Activated T-helper 1 cell treated with anti-CD3 and anti-CD28 coated beads, Interleukin-12 subunit alpha, Interleukin-12 subunit beta, Interleukin-2, Interleukin-4 antibody, amounts not matched to agents 30 ng/mL and 10 ng/mL and 1 ng/mL, durations not matched to agents 14 hours and 24 hours and 36 hours (primary cell): ENCODE measurements at regions of chr17 and their contacts with region 1.

Region 1: DNA sequence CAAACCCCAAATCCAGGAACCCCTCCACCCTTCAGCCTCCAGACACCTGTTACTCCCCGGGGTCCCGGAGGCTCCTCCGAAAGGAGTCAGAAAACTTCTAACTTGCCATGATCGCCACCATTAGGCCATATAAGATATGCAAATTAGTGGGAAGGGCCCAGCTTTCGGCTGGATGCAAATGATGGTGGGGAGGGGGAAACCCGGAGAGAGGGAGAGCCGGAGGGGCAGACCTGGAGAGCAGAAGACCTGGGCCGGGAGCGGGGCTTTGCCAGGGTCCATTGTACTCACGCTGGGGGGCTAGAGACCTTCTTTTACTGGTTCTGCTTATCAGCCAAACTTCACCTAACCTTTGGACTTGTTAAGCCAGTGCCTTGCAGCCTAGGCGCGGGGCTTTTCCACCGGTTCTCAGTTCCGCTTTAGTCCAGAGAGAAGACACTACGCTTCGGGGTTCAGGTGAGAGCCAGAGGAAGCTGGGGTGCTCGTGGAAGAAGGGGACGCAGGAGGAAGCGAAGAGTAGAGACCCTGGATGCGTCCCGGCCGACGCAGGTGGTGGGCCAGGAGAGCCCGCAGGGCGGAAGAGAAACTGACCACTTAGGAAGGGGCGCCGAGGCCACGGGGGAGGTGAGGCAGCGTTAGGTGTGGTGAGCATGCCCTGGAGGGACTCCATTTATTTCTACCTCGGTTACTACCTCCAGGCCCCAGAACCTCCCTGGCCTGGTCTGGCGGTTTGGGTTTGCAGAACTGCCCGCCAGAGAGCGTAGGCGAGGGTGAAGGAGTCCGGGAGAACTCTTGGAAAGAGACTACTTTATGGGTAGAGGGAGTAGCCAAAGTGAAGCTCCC is at the start of gene HNF1B:
- DNase-seq: no peak
- H3K4me3 Mint-ChIP-seq: peak within 1 kb of the TSS; percentile 84
- H3K27ac Mint-ChIP-seq: peak within 1 kb of the TSS; percentile 66
- H3K4me1 Mint-ChIP-seq: peaks cover 33% of the 10 kb centered on the region
- H3K27me3 Mint-ChIP-seq: peaks cover 68% of the 10 kb centered on the region
- total RNA-seq, gene HNF1B: 3.2 and 3.6 TPM in 2 replicates

Region 2: DNA sequence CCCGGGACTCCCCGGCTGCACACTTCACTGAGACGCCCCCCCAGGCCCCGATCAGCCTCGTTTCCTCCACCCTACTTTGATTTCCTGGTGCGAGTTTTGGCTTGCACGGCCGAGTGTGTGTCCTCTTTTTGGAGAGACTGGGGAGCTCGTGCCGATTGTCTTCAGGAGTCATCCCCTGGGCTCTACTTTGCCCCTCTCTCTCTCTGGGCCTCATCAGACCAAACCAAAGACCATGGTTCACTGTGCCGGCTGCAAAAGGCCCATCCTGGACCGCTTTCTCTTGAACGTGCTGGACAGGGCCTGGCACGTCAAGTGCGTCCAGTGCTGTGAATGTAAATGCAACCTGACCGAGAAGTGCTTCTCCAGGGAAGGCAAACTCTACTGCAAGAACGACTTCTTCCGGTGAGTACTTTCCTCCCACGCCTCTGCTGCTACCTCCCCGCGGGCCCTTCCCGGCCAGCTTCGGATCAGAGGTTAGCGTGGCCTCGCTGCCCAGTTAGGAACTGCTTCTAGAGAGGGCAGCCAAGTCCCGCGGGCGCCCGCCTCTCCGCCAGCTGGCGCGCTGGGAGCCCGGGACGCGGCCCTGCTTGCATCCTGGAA is 807.1 kb before region 1 on chr17:
- intact Hi-C with region 1: loop called (anchors 5 kb)
- DNase-seq: no peak
- H3K4me3 Mint-ChIP-seq: peak overlapping the region; percentile 73
- H3K27ac Mint-ChIP-seq: peak overlapping the region; percentile 79
- H3K4me1 Mint-ChIP-seq: peaks cover 32% of the 10 kb centered on the region
- H3K27me3 Mint-ChIP-seq: peaks cover 70% of the 10 kb centered on the region

Region 3: DNA sequence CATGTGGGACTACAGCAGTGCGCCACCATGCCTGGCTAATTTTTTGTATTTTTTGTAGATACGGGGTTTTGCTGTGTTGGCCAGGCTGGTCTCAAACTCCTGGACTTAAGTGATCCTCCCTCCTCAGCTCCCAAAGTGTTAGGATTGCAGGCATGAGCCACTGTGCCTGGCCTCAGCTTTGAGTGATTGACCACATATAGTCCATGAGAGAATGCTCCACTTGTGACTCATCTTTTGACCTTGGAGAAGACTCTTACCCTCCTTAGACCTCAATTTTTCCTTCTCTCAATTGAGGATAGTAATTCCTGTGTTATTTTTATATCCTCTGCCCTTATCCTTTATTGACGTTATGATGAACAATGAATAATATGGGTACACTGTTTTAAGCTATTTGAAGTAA is 286.4 kb before region 1 on chr17:
- intact Hi-C with region 1: no loop called
- DNase-seq: no peak
- H3K4me3 Mint-ChIP-seq: no peak overlapping the region
- H3K27ac Mint-ChIP-seq: no peak overlapping the region
- H3K4me1 Mint-ChIP-seq: peaks cover 11% of the 10 kb centered on the region
- H3K27me3 Mint-ChIP-seq: no peaks in the 10 kb centered on the region

Region 4: DNA sequence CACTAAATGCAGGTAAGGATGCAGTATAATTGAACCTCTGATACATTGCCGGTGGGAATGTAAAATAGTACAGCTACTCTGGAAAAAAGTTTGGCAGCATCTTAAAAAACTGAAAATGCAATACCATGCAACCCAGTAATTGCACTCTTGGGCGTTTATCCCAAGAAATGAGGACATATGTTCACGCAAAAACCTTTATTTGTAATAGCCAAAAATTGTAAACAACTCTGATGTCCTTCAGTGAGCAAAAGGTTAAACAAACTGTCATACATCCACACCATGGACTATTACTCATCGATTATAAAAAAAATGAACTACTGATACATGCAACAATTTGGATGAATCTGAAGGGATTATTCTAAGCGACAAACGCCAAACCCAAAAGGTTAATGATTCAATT is 152.9 kb before region 1 on chr17:
- intact Hi-C with region 1: no loop called
- DNase-seq: no peak
- H3K4me3 Mint-ChIP-seq: no peak overlapping the region
- H3K27ac Mint-ChIP-seq: no peak overlapping the region
- H3K4me1 Mint-ChIP-seq: peaks cover 29% of the 10 kb centered on the region
- H3K27me3 Mint-ChIP-seq: no peaks in the 10 kb centered on the region

Region 5: GRCh38 chr17:37701496-37701898 is 43.7 kb before region 1 on chr17:
- intact Hi-C with region 1: loop called (anchors 5 kb)
- DNase-seq: peak; percentile 35
- H3K4me3 Mint-ChIP-seq: peak overlapping the region; percentile 45
- H3K27ac Mint-ChIP-seq: no peak overlapping the region
- H3K4me1 Mint-ChIP-seq: peaks cover 59% of the 10 kb centered on the region
- H3K27me3 Mint-ChIP-seq: peaks cover 26% of the 10 kb centered on the region

Region 6: GRCh38 chr17:37713028-37713431 is 32.2 kb before region 1 on chr17:
- intact Hi-C with region 1: no loop called
- DNase-seq: no peak
- H3K4me3 Mint-ChIP-seq: no peak overlapping the region
- H3K27ac Mint-ChIP-seq: no peak overlapping the region
- H3K4me1 Mint-ChIP-seq: peaks cover 19% of the 10 kb centered on the region
- H3K27me3 Mint-ChIP-seq: peaks cover 23% of the 10 kb centered on the region

Region 7: GRCh38 chr17:37761059-37761458 is 15.9 kb after region 1 on chr17:
- intact Hi-C with region 1: loop called (anchors 1 kb)
- DNase-seq: no peak
- H3K4me3 Mint-ChIP-seq: peak overlapping the region; percentile 43
- H3K27ac Mint-ChIP-seq: peak overlapping the region; percentile 79
- H3K4me1 Mint-ChIP-seq: peaks cover 50% of the 10 kb centered on the region
- H3K27me3 Mint-ChIP-seq: peaks cover 25% of the 10 kb centered on the region

Region 8: GRCh38 chr17:37770631-37771518 is 25.7 kb after region 1 on chr17:
- intact Hi-C with region 1: loop called (anchors 2 kb)
- DNase-seq: peak; percentile 14
- H3K4me3 Mint-ChIP-seq: no peak overlapping the region
- H3K27ac Mint-ChIP-seq: no peak overlapping the region
- H3K4me1 Mint-ChIP-seq: peaks cover 56% of the 10 kb centered on the region
- H3K27me3 Mint-ChIP-seq: peaks cover 20% of the 10 kb centered on the region

Region 9: DNA sequence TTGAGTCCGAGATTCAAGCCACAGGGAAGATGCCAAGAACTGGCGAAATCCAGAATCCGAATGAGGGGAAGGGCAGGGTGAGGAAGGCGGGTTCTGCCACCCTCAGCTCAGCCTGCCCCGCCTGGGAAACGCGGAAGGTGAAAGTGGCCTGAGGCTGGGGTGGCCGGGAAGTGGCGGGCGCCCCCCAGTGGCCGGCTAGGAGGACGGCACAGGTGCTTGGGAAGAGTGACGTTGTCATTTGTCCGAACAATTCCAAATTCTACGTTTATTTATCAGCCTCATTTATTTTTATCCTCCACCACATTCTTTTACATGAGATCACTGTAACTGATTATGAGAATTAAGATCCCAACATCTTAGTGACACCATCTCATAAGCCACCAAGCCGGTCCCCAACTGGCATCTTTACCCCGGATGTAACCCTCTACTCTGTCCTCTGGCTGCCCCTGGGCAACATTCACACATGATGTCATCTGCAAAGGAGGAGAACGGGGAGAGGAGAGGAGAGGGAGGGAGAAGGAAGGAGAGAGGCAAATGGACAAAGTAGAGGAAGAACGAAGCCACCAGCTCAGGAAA is 839.3 kb after region 1 on chr17:
- intact Hi-C with region 1: loop called (anchors 10 kb)
- DNase-seq: peak; percentile 39
- H3K4me3 Mint-ChIP-seq: no peak overlapping the region
- H3K27ac Mint-ChIP-seq: no peak overlapping the region
- H3K4me1 Mint-ChIP-seq: peaks cover 9% of the 10 kb centered on the region
- H3K27me3 Mint-ChIP-seq: peaks cover 68% of the 10 kb centered on the region